Heart left ventricle (tissue), 16 donors: ENCODE measurements at regions of chr2 and their contacts with region 1.

Region 1: DNA sequence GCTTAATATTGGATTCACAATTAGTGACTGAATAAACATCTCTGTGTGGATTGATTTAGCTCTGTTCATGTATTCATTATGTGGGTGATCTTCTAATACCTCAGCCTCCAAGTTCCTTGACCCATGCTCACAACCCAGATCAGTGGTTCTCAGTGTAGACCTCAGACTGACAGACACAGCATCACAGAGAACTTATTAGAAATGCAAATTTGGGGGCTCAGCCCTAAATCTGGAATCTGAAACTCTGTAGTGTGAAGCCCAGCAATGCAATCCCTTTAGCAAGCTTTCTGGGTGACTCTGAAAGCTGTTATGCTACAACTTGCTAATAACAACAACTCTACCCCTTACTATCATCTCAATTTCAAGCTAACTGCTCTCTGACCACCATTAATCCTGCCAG is 273.1 kb upstream of the FANCL start:
- DNase-seq: no peak
- ATAC-seq: no peak
- H3K4me3 ChIP-seq: no peak overlapping the region
- H3K27ac ChIP-seq: no peak overlapping the region
- H3K4me1 ChIP-seq: no peaks in the 10 kb centered on the region
- H3K27me3 ChIP-seq: no peaks in the 10 kb centered on the region
- CTCF ChIP-seq: no peak
- POLR2A ChIP-seq: no peak

Region 2: GRCh38 chr2:58407487-58407886 is 106.8 kb before region 1 on chr2:
- intact Hi-C with region 1: loop called in 1 of 10 experiments (anchors 10 kb)
- DNase-seq: peak in 1 of 5 donors; percentile 29
- ATAC-seq: no peak
- H3K4me3 ChIP-seq: no peak overlapping the region
- H3K27ac ChIP-seq: no peak overlapping the region
- H3K4me1 ChIP-seq: no peaks in the 10 kb centered on the region
- H3K27me3 ChIP-seq: peaks cover 0 to 4% (median 0%) of the 10 kb centered on the region in 9 donors
- CTCF ChIP-seq: no peak
- POLR2A ChIP-seq: no peak